ENCODE measurements at regions of chr17 and their contacts with region 1.

Region 1: DNA sequence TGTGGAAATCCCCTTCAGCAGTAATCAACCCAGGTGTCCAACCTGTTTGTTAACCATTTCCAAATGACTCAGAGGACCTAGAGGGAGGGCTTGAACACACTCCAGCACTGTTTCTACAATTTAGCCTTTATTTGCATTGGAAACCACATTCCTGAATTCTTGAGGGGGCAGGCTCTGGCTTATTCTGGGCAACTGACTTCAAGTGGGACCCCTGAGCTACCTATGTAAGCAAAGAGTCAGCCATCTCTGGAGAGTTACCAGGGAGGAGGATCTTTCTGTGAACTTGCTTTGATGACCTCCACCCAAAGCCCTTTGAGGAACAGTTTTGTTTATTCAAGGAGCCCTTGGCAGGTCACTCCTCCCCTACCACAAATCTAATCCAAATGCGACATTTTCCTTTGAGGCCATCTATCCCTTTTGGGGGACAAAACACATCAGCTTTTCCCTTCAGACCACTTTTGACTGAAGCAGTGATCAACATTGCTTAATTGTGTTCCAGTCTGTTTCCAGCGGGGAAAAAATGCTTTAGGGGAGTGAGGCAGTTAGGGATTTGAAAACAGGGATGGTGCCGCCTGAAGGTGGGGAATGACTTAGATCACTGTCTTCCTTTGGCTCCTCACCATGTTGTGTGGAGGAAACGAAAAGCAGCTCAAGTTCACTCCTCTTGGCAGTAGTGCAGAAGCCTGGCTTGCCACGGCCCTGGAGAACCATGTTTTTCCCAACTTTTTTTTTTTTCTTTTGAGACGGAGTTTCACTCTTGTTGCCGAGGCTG is 46.2 kb downstream of the TUBD1 start:
- DNase-seq: peak; percentile 84
- H3K4me3 ChIP-seq: no peak overlapping the region
- H3K27ac ChIP-seq: peak overlapping the region; percentile 96
- H3K27me3 ChIP-seq: no peaks in the 10 kb centered on the region
- CTCF ChIP-seq: no peak

Region 2: GRCh38 chr17:58402047-58402446 is 1444.5 kb before region 1 on chr17:
- CTCF ChIA-PET with region 1: no interaction called
- POLR2A ChIA-PET with region 1: no interaction called
- DNase-seq: no peak
- H3K4me3 ChIP-seq: no peak overlapping the region
- H3K27ac ChIP-seq: no peak overlapping the region
- H3K27me3 ChIP-seq: no peaks in the 10 kb centered on the region
- CTCF ChIP-seq: no peak

Region 3: DNA sequence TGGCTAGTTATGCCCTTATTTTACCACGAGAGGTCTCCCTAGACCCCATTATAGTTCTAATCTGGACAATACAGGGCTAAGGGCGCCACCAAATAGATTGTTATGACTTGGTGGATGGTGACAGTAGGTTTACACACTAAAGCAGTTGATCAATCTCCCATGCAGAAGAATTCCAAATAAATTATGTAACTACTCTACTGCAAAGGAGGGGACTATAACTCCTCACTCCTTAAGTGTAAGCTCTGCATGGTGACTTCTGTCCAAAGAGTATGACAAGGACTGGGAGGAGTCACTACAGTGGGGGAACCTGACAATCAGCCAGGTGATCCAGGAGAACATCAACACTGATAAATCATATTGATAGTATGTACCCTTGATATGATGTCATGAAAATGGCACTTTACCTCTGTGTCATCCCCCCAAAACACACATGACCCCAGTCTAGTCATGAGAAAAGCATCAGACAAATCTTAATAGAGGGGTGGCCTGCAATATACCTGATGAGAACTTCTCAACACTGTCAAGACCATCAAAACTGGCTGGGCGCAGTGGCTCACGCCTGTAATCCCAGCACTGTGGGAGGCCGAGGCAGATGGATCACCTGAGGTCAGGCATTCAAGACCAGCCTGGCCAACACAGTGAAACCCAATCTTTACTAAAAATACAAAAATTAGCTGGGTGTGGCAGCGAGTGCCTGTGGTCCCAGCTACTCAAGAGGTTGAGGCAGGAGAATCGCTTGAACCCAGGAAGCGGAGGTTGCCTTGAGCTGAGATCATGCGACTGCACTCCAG is 535.3 kb before region 1 on chr17:
- CTCF ChIA-PET with region 1: interaction called, 16 read pairs
- POLR2A ChIA-PET with region 1: no interaction called
- DNase-seq: no peak
- H3K4me3 ChIP-seq: no peak overlapping the region
- H3K27ac ChIP-seq: no peak overlapping the region
- H3K27me3 ChIP-seq: peaks cover 2% of the 10 kb centered on the region
- CTCF ChIP-seq: peak; percentile 81

Region 4: GRCh38 chr17:59762513-59763374 is 83.8 kb before region 1 on chr17:
- CTCF ChIA-PET with region 1: no interaction called
- POLR2A ChIA-PET with region 1: interaction called, 22 read pairs
- DNase-seq: no peak
- H3K4me3 ChIP-seq: no peak overlapping the region
- H3K27ac ChIP-seq: no peak overlapping the region
- H3K27me3 ChIP-seq: no peaks in the 10 kb centered on the region
- CTCF ChIP-seq: no peak

Region 5: GRCh38 chr17:59786536-59787319 is 59.9 kb before region 1 on chr17:
- CTCF ChIA-PET with region 1: no interaction called
- POLR2A ChIA-PET with region 1: interaction called, 25 read pairs
- DNase-seq: peak; percentile 99
- H3K4me3 ChIP-seq: peak overlapping the region; percentile 36
- H3K27ac ChIP-seq: peak overlapping the region; percentile 92
- H3K27me3 ChIP-seq: no peaks in the 10 kb centered on the region
- CTCF ChIP-seq: no peak

Region 6: GRCh38 chr17:59859444-59860025 is 13.0 kb after region 1 on chr17:
- CTCF ChIA-PET with region 1: interaction called, 24 read pairs
- POLR2A ChIA-PET with region 1: interaction called, 11 read pairs
- DNase-seq: no peak
- H3K4me3 ChIP-seq: no peak overlapping the region
- H3K27ac ChIP-seq: no peak overlapping the region
- H3K27me3 ChIP-seq: no peaks in the 10 kb centered on the region
- CTCF ChIP-seq: peak; percentile 68

Region 7: GRCh38 chr17:59899103-59899502 is 52.5 kb after region 1 on chr17:
- CTCF ChIA-PET with region 1: no interaction called
- POLR2A ChIA-PET with region 1: interaction called, 14 read pairs
- DNase-seq: no peak
- H3K4me3 ChIP-seq: no peak overlapping the region
- H3K27ac ChIP-seq: no peak overlapping the region
- H3K27me3 ChIP-seq: no peaks in the 10 kb centered on the region
- CTCF ChIP-seq: no peak